Mammary epithelial cell (primary cell): ENCODE measurements at regions of chr1 and their contacts with region 1.

Region 1: GRCh38 chr1:245771511-245772281 is 616.9 kb downstream of the KIF26B start:
- DNase-seq: peak; percentile 40
- H3K4me3 ChIP-seq: no peak overlapping the region
- H3K27ac ChIP-seq: no peak overlapping the region
- H3K4me1 ChIP-seq: no peaks in the 10 kb centered on the region
- H3K27me3 ChIP-seq: no peaks in the 10 kb centered on the region
- CTCF ChIP-seq: no peak

Region 2: DNA sequence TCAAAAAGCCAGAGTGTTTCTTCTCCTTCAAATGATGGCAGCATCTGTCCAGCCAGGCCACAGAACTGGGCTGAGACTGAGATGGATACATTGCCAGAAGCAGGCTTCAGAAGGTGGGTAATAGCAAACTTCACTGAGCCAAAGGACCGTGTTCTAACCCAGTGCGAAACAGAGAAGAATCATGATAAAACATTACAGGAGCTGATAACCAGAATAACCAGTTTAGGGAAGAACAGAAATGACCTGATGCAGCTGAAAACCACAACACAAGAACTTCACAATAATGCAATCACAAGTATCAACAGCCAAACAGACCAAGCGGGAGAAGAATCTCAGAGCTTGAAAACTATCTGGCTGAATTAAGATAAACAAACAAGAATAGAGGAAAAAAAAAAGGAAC is 46.9 kb before region 1 on chr1:
- CTCF ChIA-PET with region 1: no interaction called
- dilution Hi-C with region 1: no loop called
- in situ Hi-C with region 1: no loop called
- intact Hi-C with region 1: no loop called
- DNase-seq: peak; percentile 41
- H3K4me3 ChIP-seq: no peak overlapping the region
- H3K27ac ChIP-seq: no peak overlapping the region
- H3K4me1 ChIP-seq: no peaks in the 10 kb centered on the region
- H3K27me3 ChIP-seq: no peaks in the 10 kb centered on the region
- CTCF ChIP-seq: no peak

Region 3: DNA sequence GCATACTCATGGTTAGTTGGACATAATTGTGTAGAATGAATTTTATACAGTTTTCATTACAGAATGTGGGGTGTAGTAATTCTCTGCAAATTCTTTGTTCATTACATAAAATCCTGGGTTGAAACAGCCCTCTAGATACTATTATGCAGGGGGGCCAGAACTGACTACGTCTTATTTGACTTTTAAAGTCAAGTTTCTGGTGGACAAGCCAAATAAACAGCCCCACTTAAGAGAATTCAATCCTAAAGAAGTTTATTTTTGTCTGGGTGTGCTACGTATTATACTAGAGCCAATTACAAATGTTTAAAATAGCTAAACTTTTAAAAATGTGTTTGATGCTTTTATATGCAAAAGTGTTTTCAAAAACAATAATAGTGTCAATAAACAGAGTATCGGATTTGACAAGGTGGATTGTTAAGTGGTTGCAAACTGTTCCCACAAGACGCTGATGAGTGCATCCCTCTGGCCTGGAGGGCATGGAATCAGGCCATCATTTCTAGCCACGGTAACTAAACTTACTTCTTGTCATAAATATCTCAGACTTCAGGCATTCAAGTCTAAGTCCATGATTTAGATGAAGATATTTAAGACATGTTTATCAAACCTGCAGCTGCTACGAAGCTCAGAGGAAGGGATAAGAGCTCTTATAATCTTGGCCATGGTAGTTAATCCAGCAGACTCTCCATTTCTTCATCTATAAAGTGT is 29.4 kb after region 1 on chr1:
- CTCF ChIA-PET with region 1: no interaction called
- dilution Hi-C with region 1: no loop called
- in situ Hi-C with region 1: no loop called
- intact Hi-C with region 1: loop called (anchors 1 kb)
- DNase-seq: no peak
- H3K4me3 ChIP-seq: no peak overlapping the region
- H3K27ac ChIP-seq: no peak overlapping the region
- H3K4me1 ChIP-seq: no peaks in the 10 kb centered on the region
- H3K27me3 ChIP-seq: no peaks in the 10 kb centered on the region
- CTCF ChIP-seq: no peak

Region 4: GRCh38 chr1:246306415-246307037 is 534.8 kb after region 1 on chr1:
- CTCF ChIA-PET with region 1: no interaction called
- dilution Hi-C with region 1: no loop called
- in situ Hi-C with region 1: no loop called
- intact Hi-C with region 1: no loop called
- DNase-seq: no peak
- H3K4me3 ChIP-seq: no peak overlapping the region
- H3K27ac ChIP-seq: no peak overlapping the region
- H3K4me1 ChIP-seq: peaks cover 1% of the 10 kb centered on the region
- H3K27me3 ChIP-seq: no peaks in the 10 kb centered on the region
- CTCF ChIP-seq: no peak